ENCODE measurements at regions of chr1 and their contacts with region 1.

Region 1: GRCh38 chr1:25895365-25895993 is 10.7 kb downstream of the STMN1 start:
- DNase-seq: peak; percentile 51
- H3K4me3 ChIP-seq: no peak overlapping the region
- CTCF ChIP-seq: peak; percentile 99

Region 2: GRCh38 chr1:25874934-25875855 is 20.3 kb before region 1 on chr1 and contains the start of gene PAQR7:
- CTCF ChIA-PET with region 1: interaction called, 24 read pairs
- POLR2A ChIA-PET with region 1: interaction called, 12 read pairs
- DNase-seq: no peak
- H3K4me3 ChIP-seq: peak within 1 kb of the TSS; percentile 74
- CTCF ChIP-seq: peak; percentile 42

Region 3: DNA sequence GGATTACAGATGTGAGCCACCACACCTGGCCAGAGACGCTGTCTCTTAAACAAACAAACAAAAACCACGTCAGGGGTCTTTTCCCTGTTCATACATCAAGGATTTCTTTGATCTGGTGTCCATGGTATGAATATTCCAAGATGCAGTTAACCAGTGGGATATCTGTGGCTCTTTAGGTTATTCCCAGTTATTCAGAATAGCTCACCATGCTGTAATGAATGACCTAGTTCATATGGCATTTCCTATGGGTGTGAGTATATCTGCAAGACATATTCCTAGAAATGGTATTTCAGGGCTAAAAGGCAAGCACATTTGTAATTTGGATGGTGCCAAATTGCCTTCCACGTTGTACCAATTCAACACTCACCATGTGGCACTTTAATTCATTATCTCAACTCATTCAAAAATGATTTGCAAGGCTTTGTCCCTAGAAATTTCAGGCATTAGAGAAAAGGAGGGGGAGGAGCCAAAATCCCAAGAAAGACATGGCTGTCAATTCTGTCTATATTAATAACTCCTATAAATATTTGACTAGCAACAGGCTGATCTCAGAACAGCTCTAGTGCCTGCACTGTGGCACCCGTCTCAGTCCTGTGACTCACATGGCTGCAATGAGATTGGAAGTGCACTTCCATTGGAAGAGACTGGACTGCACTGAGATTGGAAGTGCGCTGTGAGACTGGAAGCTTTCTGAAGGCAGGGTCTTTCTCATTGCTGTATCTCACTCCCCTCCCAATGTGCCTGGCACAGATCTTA is 16.8 kb after region 1 on chr1:
- CTCF ChIA-PET with region 1: interaction called, 46 read pairs
- POLR2A ChIA-PET with region 1: interaction called, 3 read pairs
- DNase-seq: peak; percentile 52
- H3K4me3 ChIP-seq: no peak overlapping the region
- CTCF ChIP-seq: no peak

Region 4: DNA sequence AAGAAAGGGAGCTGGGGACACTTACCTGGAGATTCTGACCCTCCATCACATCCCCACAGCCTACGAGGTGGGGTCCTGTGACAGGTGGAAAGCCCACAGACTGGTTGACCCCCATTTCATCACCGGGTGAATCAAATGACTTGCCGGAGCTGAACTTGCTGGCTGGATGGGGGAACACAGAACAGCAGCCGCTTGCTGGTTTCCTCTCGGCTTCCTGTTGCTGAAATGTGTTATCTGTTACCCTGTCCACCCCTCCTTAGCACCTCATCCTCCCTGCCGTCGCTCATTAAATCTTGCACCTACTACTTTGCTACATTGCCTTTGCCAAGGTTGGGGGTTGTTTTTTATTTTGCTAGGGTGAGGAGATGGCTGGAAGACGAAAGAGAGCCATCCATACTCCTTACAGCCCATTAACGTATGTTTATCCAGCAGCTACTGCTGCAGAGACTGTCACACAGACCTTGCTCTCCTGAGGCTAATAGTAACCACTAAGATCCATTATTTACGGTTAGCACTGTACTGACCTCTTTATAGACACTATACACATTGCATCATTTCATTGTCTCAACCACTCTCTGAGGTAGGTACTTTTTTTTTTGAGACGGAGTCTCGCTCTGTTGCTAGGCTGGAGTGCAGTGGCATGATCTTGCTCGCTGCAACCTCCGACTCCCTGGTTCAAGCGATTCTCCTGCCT is 95.4 kb after region 1 on chr1:
- CTCF ChIA-PET with region 1: interaction called, 609 read pairs
- POLR2A ChIA-PET with region 1: no interaction called
- DNase-seq: no peak
- H3K4me3 ChIP-seq: no peak overlapping the region
- CTCF ChIP-seq: no peak

Region 5: GRCh38 chr1:26009796-26010460 is 114.4 kb after region 1 on chr1:
- CTCF ChIA-PET with region 1: interaction called, 609 read pairs
- POLR2A ChIA-PET with region 1: no interaction called
- DNase-seq: no peak
- H3K4me3 ChIP-seq: no peak overlapping the region
- CTCF ChIP-seq: peak; percentile 11

Region 6: GRCh38 chr1:26021647-26022403 is 126.3 kb after region 1 on chr1 and contains the start of gene EXTL1:
- CTCF ChIA-PET with region 1: interaction called, 43 read pairs
- POLR2A ChIA-PET with region 1: interaction called, 5 read pairs
- DNase-seq: no peak
- H3K4me3 ChIP-seq: peak within 1 kb of the TSS; percentile 65
- CTCF ChIP-seq: no peak

Region 7: GRCh38 chr1:26035959-26036755 is 140.7 kb after region 1 on chr1:
- CTCF ChIA-PET with region 1: interaction called, 70 read pairs
- POLR2A ChIA-PET with region 1: interaction called, 4 read pairs
- DNase-seq: no peak
- H3K4me3 ChIP-seq: peak overlapping the region; percentile 79
- CTCF ChIP-seq: peak; percentile 97